ENCODE measurements at regions of chr20 and their contacts with region 1.

Region 1: GRCh38 chr20:15451241-15451640 is 1113.8 kb upstream of the FLRT3 start:
- DNase-seq: no peak
- CTCF ChIP-seq: no peak

Region 2: GRCh38 chr20:14622796-14623195 is 828.4 kb before region 1 on chr20:
- CTCF ChIA-PET with region 1: no interaction called
- POLR2A ChIA-PET with region 1: interaction called, 14 read pairs
- DNase-seq: no peak
- CTCF ChIP-seq: no peak

Region 3: DNA sequence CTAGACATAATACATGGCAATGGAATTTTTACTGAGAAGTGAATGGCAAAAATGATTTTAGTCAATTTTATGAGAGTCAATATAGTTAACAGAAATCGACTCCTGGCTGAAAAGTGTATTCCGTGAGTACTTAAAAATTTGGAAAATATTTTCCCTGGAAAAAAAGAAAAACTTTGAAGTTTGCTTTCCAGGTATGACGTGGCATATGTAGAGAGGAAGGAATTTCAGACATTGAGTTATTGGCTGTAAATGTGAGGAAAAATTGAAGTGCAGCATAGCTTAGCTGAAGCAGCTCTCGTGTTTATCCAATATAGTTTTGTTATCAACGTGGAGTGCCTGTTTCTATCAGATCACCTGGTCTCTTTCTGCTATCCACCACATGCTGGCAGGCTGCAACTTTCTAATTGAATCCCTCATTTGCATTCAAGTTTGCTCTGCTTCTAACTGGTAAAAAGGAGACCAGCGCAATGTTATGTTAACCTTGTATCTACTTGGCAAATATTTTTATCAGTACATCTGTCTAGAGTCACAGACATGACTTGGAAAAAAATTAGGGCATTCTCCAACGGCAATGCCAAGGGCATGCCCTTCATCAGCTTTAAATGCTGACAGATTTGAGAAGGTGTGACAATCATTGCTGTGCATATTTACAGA is 11.1 kb before region 1 on chr20:
- CTCF ChIA-PET with region 1: no interaction called
- POLR2A ChIA-PET with region 1: no interaction called
- DNase-seq: no peak
- CTCF ChIP-seq: no peak

Region 4: DNA sequence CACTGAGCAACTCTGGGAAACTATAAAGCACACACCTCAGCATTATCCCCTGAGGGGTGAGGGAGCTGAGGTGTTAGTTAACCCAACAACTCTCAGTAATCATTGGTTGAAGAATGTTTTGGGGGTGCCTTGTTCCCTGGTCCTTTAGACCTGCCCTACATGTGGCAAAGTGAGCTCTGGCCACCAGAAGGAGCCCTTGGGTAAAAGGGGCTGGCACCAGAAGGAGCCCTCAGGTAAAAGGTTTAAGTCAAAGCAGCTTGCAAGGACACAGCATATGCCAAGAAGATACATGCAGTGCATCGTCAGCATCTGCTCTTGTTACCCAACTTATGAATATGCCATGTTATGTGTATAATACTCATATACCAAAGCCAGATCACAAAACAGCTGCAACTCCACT is 40.3 kb after region 1 on chr20:
- CTCF ChIA-PET with region 1: no interaction called
- POLR2A ChIA-PET with region 1: no interaction called
- DNase-seq: no peak
- CTCF ChIP-seq: no peak